Sigmoid colon (tissue), 7 donors: ENCODE measurements at regions of chr1 and their contacts with region 1.

Region 1: GRCh38 chr1:145927063-145927886 is at the start of gene RBM8A:
- DNase-seq: peak; percentile 98
- H3K4me3 ChIP-seq: peak within 1 kb of the TSS; percentile 58 to 70 (median 66)
- H3K27ac ChIP-seq: peak within 1 kb of the TSS; percentile 90 to 93 (median 92)
- H3K4me1 ChIP-seq: peaks cover 0 to 20% (median 19%) of the 10 kb centered on the region in 4 donors
- H3K27me3 ChIP-seq: no peaks in the 10 kb centered on the region
- CTCF ChIP-seq: peak; percentile 15 to 79 (median 68)
- EP300 ChIP-seq: no peak
- POLR2A ChIP-seq: peak; percentile 98 to 99
- total RNA-seq, gene RBM8A: 77.8 to 102 (median 96.8) TPM

Region 2: GRCh38 chr1:145906954-145907753 is 20.1 kb before region 1 on chr1:
- intact Hi-C with region 1: no loop called
- DNase-seq: no peak
- H3K4me3 ChIP-seq: no peak overlapping the region
- H3K27ac ChIP-seq: no peak overlapping the region
- H3K4me1 ChIP-seq: peaks cover 0 to 9% (median 4%) of the 10 kb centered on the region in 4 donors
- H3K27me3 ChIP-seq: no peaks in the 10 kb centered on the region
- CTCF ChIP-seq: no peak
- EP300 ChIP-seq: no peak
- POLR2A ChIP-seq: no peak

Region 3: GRCh38 chr1:145957443-145958319 is 30.4 kb after region 1 on chr1 and contains the start of gene LIX1L:
- intact Hi-C with region 1: loop called (anchors 2 kb)
- DNase-seq: peak; percentile 99
- H3K4me3 ChIP-seq: peak within 1 kb of the TSS; percentile 62 to 95 (median 74)
- H3K27ac ChIP-seq: peak within 1 kb of the TSS; percentile 95 to 100 (median 96)
- H3K4me1 ChIP-seq: peaks cover 0 to 85% (median 71%) of the 10 kb centered on the region in 4 donors
- H3K27me3 ChIP-seq: no peaks in the 10 kb centered on the region
- CTCF ChIP-seq: no peak
- EP300 ChIP-seq: peak in 2 of 4 donors; percentile 39 to 59
- POLR2A ChIP-seq: peak; percentile 74 to 84
- total RNA-seq, gene LIX1L: 26.9 to 42.5 (median 36.0) TPM